ENCODE measurements at regions of chr14 and their contacts with region 1.

Region 1: GRCh38 chr14:65927931-65928356 is 515.4 kb downstream of the FUT8 start:
- DNase-seq: peak; percentile 78
- ATAC-seq: peak; percentile 95
- H3K4me3 Mint-ChIP-seq: peak overlapping the region; percentile 65
- H3K27ac Mint-ChIP-seq: peak overlapping the region; percentile 94
- H3K4me1 Mint-ChIP-seq: peaks cover 60% of the 10 kb centered on the region
- H3K27me3 Mint-ChIP-seq: no peaks in the 10 kb centered on the region

Region 2: DNA sequence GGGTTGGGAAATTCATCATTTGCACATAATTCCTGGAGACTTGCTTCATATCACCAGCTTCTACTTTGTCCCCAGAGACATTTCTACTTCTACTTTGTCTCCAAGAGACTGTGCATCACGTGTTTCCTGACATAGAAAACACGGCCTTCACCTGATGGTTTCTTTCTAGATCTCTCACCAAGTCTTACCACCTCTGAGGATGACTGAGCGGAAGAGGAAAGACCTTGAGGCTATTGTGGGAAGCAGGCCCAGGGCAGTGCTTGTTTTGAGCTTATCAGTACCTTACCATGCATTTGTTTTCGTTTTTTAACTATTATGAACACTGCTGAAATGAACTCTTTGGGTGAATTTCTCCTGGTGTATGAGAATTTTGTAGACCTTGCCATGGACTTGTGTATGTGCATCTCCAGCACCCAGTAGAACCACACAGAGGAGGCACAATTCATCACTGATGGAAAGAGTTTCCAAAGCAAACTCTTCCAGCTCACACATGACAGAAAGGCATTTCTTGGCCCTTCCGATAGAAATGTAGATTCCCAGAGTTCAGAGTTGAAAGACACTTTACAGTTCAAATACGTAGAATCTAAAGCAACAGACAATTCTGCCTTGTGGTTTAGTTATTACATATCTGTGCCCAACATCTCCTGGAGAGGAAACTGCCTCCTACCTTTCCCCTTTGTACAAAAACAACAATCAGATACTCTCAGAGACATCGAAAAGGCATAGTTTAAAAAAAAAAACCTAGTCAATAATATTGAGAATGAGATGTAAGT is 80.7 kb before region 1 on chr14:
- POLR2A ChIA-PET with region 1: interaction called, 35 read pairs
- DNase-seq: peak; percentile 63
- ATAC-seq: peak; percentile 77
- H3K4me3 Mint-ChIP-seq: peak overlapping the region; percentile 75
- H3K27ac Mint-ChIP-seq: peak overlapping the region; percentile 94
- H3K4me1 Mint-ChIP-seq: peaks cover 66% of the 10 kb centered on the region
- H3K27me3 Mint-ChIP-seq: no peaks in the 10 kb centered on the region

Region 3: GRCh38 chr14:65860956-65861611 is 66.9 kb before region 1 on chr14:
- POLR2A ChIA-PET with region 1: interaction called, 23 read pairs
- DNase-seq: peak; percentile 71
- ATAC-seq: peak; percentile 90
- H3K4me3 Mint-ChIP-seq: peak overlapping the region; percentile 36
- H3K27ac Mint-ChIP-seq: peak overlapping the region; percentile 86
- H3K4me1 Mint-ChIP-seq: peaks cover 56% of the 10 kb centered on the region
- H3K27me3 Mint-ChIP-seq: no peaks in the 10 kb centered on the region

Region 4: DNA sequence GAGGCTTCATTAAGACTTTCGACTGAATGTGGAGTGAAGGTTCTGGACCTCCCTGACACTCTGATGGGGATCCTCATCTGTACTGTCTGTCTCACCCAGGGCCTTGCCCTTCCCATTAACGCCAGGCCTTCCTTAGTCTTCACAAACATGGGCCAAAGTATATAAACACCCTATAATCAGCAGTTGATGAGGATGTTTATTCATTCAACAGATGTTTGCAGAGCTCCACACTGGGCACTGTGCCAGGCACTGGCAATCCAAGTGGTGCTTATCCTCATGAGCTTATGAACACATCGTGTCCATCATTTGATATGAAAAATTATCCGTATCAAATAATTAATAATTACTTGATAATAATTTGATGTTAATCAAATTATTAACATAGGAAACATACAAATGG is 61.1 kb before region 1 on chr14:
- POLR2A ChIA-PET with region 1: interaction called, 23 read pairs
- DNase-seq: no peak
- ATAC-seq: no peak
- H3K4me3 Mint-ChIP-seq: no peak overlapping the region
- H3K27ac Mint-ChIP-seq: no peak overlapping the region
- H3K4me1 Mint-ChIP-seq: peaks cover 38% of the 10 kb centered on the region
- H3K27me3 Mint-ChIP-seq: no peaks in the 10 kb centered on the region

Region 5: GRCh38 chr14:65879248-65880009 is 48.5 kb before region 1 on chr14:
- POLR2A ChIA-PET with region 1: interaction called, 64 read pairs
- DNase-seq: no peak
- ATAC-seq: peak; percentile 71
- H3K4me3 Mint-ChIP-seq: peak overlapping the region; percentile 31
- H3K27ac Mint-ChIP-seq: peak overlapping the region; percentile 84
- H3K4me1 Mint-ChIP-seq: peaks cover 23% of the 10 kb centered on the region
- H3K27me3 Mint-ChIP-seq: no peaks in the 10 kb centered on the region

Region 6: GRCh38 chr14:65949711-65950516 is 22.0 kb after region 1 on chr14:
- POLR2A ChIA-PET with region 1: interaction called, 16 read pairs
- DNase-seq: no peak
- ATAC-seq: peak; percentile 70
- H3K4me3 Mint-ChIP-seq: peak overlapping the region; percentile 37
- H3K27ac Mint-ChIP-seq: peak overlapping the region; percentile 94
- H3K4me1 Mint-ChIP-seq: peaks cover 39% of the 10 kb centered on the region
- H3K27me3 Mint-ChIP-seq: no peaks in the 10 kb centered on the region

Region 7: GRCh38 chr14:65958664-65959562 is 31.0 kb after region 1 on chr14:
- POLR2A ChIA-PET with region 1: interaction called, 24 read pairs
- DNase-seq: no peak
- ATAC-seq: peak; percentile 66
- H3K4me3 Mint-ChIP-seq: no peak overlapping the region
- H3K27ac Mint-ChIP-seq: peak overlapping the region; percentile 38
- H3K4me1 Mint-ChIP-seq: peaks cover 24% of the 10 kb centered on the region
- H3K27me3 Mint-ChIP-seq: peaks cover 2% of the 10 kb centered on the region

Region 8: GRCh38 chr14:65981192-65981843 is 53.4 kb after region 1 on chr14:
- POLR2A ChIA-PET with region 1: no interaction called
- DNase-seq: no peak
- ATAC-seq: no peak
- H3K4me3 Mint-ChIP-seq: no peak overlapping the region
- H3K27ac Mint-ChIP-seq: no peak overlapping the region
- H3K4me1 Mint-ChIP-seq: peaks cover 7% of the 10 kb centered on the region
- H3K27me3 Mint-ChIP-seq: peaks cover 5% of the 10 kb centered on the region

Measured in activated naive CD8-positive, alpha-beta T cell treated with anti-CD3 and anti-CD28 coated beads, Interleukin-2, amount 10 ng/mL, durations not matched to agents 7 days and 5 days (primary cell).